PC-9 (cell line): ENCODE measurements at regions of chr1 and their contacts with region 1.

Region 1: DNA sequence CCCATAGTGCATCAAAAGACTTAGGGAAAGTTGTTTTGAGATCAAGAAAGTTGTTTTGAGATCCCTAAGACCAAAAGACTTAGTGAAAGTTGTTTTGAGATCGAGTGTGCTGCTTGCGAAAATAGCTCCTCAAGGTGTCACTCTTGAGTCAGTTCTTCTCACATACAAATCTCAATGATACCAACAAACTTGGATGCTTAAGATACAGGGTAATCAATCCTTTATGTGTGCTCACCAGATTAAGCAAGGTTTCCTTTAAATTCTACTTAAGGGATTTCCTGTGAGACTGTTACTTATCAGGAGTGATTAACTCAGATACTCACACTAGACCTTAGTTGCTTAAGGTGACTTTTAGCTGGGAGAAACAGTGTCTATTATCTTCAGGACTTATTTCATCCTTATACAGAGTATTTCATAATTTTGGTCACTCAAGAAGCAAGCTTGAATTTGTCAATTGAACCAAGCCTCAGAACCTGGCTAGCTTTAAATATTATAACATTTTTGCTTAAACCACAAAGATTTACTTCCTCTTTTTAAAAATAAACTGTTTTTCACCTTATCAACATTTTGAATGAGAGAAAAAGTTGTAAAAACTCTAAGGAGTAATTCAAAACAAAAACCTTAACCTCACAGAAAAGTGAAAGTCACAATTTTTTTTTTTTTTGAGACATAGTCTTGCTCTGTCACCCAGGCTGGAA is 8.0 kb upstream of the RLF start:
- DNase-seq: peak; percentile 15 to 59
- H3K4me3 ChIP-seq: no peak overlapping the region
- H3K27ac ChIP-seq: no peak overlapping the region
- H3K4me1 ChIP-seq: peaks cover 28% of the 10 kb centered on the region
- H3K27me3 ChIP-seq: no peaks in the 10 kb centered on the region
- CTCF ChIP-seq: peak; percentile 77

Region 2: GRCh38 chr1:39981957-39982356 is 171.3 kb before region 1 on chr1:
- CTCF ChIA-PET with region 1: no interaction called
- POLR2A ChIA-PET with region 1: no interaction called
- intact Hi-C with region 1: no loop called
- DNase-seq: peak; percentile 90 to 93
- H3K4me3 ChIP-seq: no peak overlapping the region
- H3K27ac ChIP-seq: peak overlapping the region; percentile 65
- H3K4me1 ChIP-seq: peaks cover 36% of the 10 kb centered on the region
- H3K27me3 ChIP-seq: no peaks in the 10 kb centered on the region
- CTCF ChIP-seq: no peak

Region 3: GRCh38 chr1:40096977-40097782 is 56.0 kb before region 1 on chr1 and contains the start of gene PPT1:
- CTCF ChIA-PET with region 1: interaction called, 18 read pairs
- POLR2A ChIA-PET with region 1: no interaction called
- intact Hi-C with region 1: no loop called
- DNase-seq: peak; percentile 66 to 80
- H3K4me3 ChIP-seq: peak within 1 kb of the TSS; percentile 92
- H3K27ac ChIP-seq: peak within 1 kb of the TSS; percentile 40; the same call in 1 of the 2 replicates
- H3K4me1 ChIP-seq: peaks cover 47% of the 10 kb centered on the region
- H3K27me3 ChIP-seq: no peaks in the 10 kb centered on the region
- CTCF ChIP-seq: no peak
- total RNA-seq, gene PPT1: 120 and 154 TPM in 2 replicates

Region 4: GRCh38 chr1:40305457-40305856 is 152.2 kb after region 1 on chr1:
- CTCF ChIA-PET with region 1: interaction called, 4 read pairs
- POLR2A ChIA-PET with region 1: no interaction called
- intact Hi-C with region 1: loop called (anchors 1 kb)
- DNase-seq: peak; percentile 61 to 78
- H3K4me3 ChIP-seq: peak overlapping the region; percentile 25; the same call in 1 of the 2 replicates
- H3K27ac ChIP-seq: peak overlapping the region; percentile 88
- H3K4me1 ChIP-seq: peaks cover 30% of the 10 kb centered on the region
- H3K27me3 ChIP-seq: no peaks in the 10 kb centered on the region
- CTCF ChIP-seq: peak; percentile 55

Region 5: DNA sequence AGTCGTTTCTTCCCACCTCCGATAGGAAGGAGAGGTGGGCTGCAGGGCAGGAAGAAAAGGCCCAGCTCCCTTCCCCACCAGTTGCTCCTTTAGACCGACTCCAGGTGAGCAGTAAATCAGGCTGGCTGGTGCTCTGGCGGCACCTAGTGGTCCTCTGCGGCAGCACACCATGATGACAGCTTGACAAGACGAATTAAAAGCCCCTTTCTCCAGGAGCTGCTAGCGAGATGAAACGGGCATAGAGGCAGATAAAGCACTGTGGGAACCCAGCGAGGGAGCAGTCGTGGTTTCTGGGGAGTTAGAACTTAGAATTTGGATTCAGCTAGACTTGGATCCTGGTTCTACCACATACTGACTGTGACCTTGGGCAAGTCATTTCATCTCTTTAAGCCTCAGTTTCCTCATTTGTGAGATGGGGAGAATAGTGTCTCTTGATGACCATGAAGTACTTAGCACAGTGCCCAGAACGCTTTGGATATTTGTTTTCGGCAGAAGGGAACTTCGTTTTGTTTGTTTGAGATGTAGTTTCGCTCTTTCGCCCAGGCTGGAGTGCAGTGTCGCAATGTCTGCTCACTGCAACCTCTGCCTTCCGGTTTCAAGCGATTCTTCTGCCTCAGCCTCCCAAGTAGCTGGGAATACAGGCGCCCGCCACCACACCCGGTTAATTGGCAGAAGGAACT is 185.7 kb after region 1 on chr1:
- CTCF ChIA-PET with region 1: interaction called, 40 read pairs
- POLR2A ChIA-PET with region 1: no interaction called
- intact Hi-C with region 1: loop called (anchors 1 kb)
- DNase-seq: peak; percentile 71 to 93
- H3K4me3 ChIP-seq: no peak overlapping the region; the same call in 1 of the 2 replicates
- H3K27ac ChIP-seq: no peak overlapping the region
- H3K4me1 ChIP-seq: peaks cover 10% of the 10 kb centered on the region
- H3K27me3 ChIP-seq: no peaks in the 10 kb centered on the region
- CTCF ChIP-seq: peak; percentile 98

Region 6: DNA sequence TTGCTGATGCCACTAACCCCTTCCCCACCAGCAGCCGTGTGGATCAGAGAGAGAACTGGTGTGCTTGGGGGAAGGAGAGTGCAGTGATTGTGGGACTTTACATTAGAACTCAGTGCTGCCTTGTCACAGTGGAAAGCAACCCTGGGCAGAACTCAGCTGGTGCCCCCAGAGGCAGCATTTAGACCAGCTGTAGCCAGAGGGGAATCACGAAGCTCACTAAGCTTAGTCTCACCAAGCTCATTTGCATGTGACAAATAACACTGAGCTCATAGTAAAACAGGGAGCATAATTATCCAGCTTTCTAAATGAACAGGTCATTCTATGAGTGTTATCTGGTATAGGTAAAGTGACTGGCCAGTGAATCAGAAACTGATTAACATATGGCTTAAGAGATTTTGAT is 210.5 kb after region 1 on chr1:
- CTCF ChIA-PET with region 1: no interaction called
- POLR2A ChIA-PET with region 1: interaction called, 18 read pairs
- intact Hi-C with region 1: no loop called
- DNase-seq: no peak
- H3K4me3 ChIP-seq: no peak overlapping the region
- H3K27ac ChIP-seq: no peak overlapping the region
- H3K4me1 ChIP-seq: no peaks in the 10 kb centered on the region
- H3K27me3 ChIP-seq: peaks cover 7% of the 10 kb centered on the region
- CTCF ChIP-seq: no peak

Region 7: DNA sequence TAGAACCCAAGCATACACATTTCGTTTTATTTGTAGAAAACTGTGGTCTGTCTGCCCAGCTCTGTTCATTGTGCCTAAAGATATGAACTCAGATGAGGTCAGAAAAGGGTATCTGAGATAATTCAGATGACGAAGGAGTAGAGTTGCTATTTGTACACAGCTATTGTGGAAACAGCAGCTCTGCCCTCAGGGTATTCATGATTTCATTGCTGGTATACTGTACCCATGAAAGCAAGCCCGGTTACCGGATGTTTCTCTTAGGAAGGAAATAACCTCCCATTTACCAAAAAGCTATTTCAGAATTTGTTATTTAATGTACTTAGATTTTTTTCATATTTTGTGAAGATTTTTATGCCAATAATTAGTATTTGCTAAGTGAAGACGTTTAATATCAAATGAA is 258.1 kb after region 1 on chr1:
- CTCF ChIA-PET with region 1: interaction called, 12 read pairs
- POLR2A ChIA-PET with region 1: no interaction called
- intact Hi-C with region 1: no loop called
- DNase-seq: no peak
- H3K4me3 ChIP-seq: no peak overlapping the region
- H3K27ac ChIP-seq: no peak overlapping the region
- H3K4me1 ChIP-seq: no peaks in the 10 kb centered on the region
- H3K27me3 ChIP-seq: no peaks in the 10 kb centered on the region
- CTCF ChIP-seq: no peak

Region 8: GRCh38 chr1:40421431-40422384 is 268.5 kb after region 1 on chr1:
- CTCF ChIA-PET with region 1: no interaction called
- POLR2A ChIA-PET with region 1: interaction called, 13 read pairs
- intact Hi-C with region 1: no loop called
- DNase-seq: no peak
- H3K4me3 ChIP-seq: no peak overlapping the region
- H3K27ac ChIP-seq: no peak overlapping the region
- H3K4me1 ChIP-seq: no peaks in the 10 kb centered on the region
- H3K27me3 ChIP-seq: no peaks in the 10 kb centered on the region
- CTCF ChIP-seq: no peak